Activated CD4-positive, alpha-beta T cell treated with anti-CD3 and anti-CD28 coated beads for 36 hours (primary cell): ENCODE measurements at regions of chr18 and their contacts with region 1.

Region 1: DNA sequence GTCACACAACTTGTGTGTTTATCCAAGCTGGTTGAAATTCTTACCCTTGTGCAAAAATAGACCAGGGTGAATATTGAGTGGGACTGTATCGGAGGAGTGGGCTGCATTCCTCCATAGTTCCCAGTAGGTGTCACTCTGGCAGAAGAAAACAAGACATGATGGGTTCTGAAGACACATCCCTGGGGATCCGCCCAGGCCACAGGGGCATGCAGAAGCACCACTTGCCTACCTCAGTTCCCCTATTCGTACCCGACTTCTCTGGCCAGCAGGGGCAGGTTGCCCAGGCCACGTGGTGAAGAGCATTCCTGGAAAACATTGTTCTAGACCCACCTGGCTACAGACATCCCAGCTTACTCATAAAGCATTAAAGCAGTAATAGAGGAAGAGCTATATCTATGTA is 168.2 kb downstream of the FAM210A start:
- DNase-seq: peak; percentile 58
- ATAC-seq: peak; percentile 29
- H3K4me3 Mint-ChIP-seq: no peak overlapping the region
- H3K27ac Mint-ChIP-seq: no peak overlapping the region
- H3K4me1 Mint-ChIP-seq: peaks cover 41% of the 10 kb centered on the region
- H3K27me3 Mint-ChIP-seq: no peaks in the 10 kb centered on the region

Region 2: DNA sequence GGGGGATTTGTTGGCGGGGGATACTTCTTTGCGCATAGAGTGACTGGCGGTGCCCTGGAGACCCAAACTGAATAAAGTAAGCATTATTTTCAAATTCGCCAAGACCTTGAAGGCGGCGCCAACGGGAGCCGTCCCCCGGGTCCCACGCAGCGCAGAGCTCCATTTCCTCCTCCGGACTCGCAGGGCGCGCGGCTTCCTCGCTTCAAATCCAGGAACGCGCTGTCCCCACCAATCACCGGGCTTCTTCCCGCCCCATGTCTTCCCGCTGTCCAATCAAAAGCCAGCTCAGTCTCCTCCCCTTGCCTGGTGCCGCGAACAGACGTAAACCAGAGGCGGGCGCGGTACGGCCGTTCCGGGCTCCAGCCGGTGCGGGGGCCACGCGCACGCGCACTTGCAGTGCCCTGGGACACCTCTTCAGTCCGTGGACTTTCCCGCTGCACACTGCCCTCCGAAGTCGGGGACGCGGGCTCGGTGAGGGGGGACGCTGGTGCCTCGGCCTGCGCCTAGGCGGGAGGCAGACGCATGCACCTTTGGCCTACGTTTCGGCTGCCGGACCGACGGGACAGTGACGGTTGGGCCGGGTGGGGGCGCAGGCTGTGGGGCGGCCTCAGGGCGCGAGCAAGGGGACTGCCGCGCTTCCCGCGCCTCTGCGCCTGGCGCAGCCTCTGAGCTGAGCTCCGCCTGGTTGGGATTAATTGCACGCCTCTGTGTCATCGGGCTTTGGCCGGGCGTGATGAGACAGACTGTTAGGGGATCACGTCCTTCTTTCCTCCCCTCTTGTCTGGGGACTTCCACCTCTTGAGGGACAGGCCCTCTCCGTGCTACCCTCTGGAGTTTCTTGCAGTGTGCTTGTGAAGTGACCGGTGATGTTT is 566.9 kb before region 1 on chr18 and contains the start of gene CEP192:
- CTCF ChIA-PET with region 1: no interaction called
- POLR2A ChIA-PET with region 1: no interaction called
- intact Hi-C with region 1: loop called in 1 of 2 experiments (anchors 2 kb)
- DNase-seq: peak; percentile 98
- ATAC-seq: peak; percentile 90
- H3K4me3 Mint-ChIP-seq: peak within 1 kb of the TSS; percentile 87
- H3K27ac Mint-ChIP-seq: peak within 1 kb of the TSS; percentile 93
- H3K4me1 Mint-ChIP-seq: peaks cover 21% of the 10 kb centered on the region
- H3K27me3 Mint-ChIP-seq: no peaks in the 10 kb centered on the region
- total RNA-seq, gene CEP192: 36.0 to 39.3 TPM

Region 3: GRCh38 chr18:13229001-13229671 is 329.0 kb before region 1 on chr18:
- CTCF ChIA-PET with region 1: no interaction called
- POLR2A ChIA-PET with region 1: no interaction called
- intact Hi-C with region 1: no loop called
- DNase-seq: no peak
- ATAC-seq: no peak
- H3K4me3 Mint-ChIP-seq: no peak overlapping the region
- H3K27ac Mint-ChIP-seq: no peak overlapping the region
- H3K4me1 Mint-ChIP-seq: no peaks in the 10 kb centered on the region
- H3K27me3 Mint-ChIP-seq: no peaks in the 10 kb centered on the region

Region 4: DNA sequence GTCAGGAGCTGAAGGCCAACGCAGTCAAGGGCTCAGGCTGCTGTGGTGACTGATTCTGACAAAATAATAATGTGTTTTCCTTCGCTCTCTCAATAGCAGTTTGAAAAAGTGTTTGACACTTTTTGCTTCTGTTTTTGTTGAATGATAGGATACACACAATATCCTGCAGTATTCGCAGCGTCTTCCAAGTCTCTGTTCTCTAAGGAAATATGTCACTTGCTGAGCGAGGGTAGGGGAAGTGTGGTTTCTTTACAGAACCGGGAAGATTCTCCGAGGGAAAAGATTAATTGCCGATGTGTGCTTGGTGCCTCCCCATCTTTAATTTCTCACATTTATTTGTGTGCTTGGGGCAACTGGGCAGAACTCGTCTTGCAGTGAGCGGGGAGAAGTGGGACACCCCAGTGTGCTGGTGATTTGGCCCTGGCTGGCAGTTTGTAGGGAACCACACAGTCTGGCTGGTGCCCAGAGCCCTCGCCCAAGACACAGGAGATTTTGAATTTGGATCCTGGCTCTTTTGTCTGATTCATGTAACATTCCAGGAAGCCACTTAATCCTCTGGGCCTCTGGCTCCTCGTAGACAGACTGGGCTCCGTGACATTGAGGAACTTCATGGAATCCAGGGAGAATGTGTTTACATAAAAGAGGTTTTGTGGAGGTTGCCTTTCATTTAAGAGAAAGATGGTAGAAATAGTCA is 170.1 kb before region 1 on chr18:
- CTCF ChIA-PET with region 1: no interaction called
- POLR2A ChIA-PET with region 1: no interaction called
- intact Hi-C with region 1: no loop called
- DNase-seq: no peak
- ATAC-seq: no peak
- H3K4me3 Mint-ChIP-seq: no peak overlapping the region
- H3K27ac Mint-ChIP-seq: peak overlapping the region; percentile 6
- H3K4me1 Mint-ChIP-seq: peaks cover 27% of the 10 kb centered on the region
- H3K27me3 Mint-ChIP-seq: no peaks in the 10 kb centered on the region

Region 5: GRCh38 chr18:13471971-13472628 is 86.0 kb before region 1 on chr18:
- CTCF ChIA-PET with region 1: no interaction called
- POLR2A ChIA-PET with region 1: no interaction called
- intact Hi-C with region 1: no loop called
- DNase-seq: no peak
- ATAC-seq: no peak
- H3K4me3 Mint-ChIP-seq: no peak overlapping the region
- H3K27ac Mint-ChIP-seq: peak overlapping the region; percentile 25
- H3K4me1 Mint-ChIP-seq: peaks cover 46% of the 10 kb centered on the region
- H3K27me3 Mint-ChIP-seq: no peaks in the 10 kb centered on the region

Region 6: GRCh38 chr18:13577091-13577697 is 19.1 kb after region 1 on chr18:
- CTCF ChIA-PET with region 1: interaction called, 6 read pairs
- POLR2A ChIA-PET with region 1: interaction called, 4 read pairs
- intact Hi-C with region 1: loop called in 1 of 2 experiments (anchors 2 kb)
- DNase-seq: peak; percentile 73
- ATAC-seq: peak; percentile 90
- H3K4me3 Mint-ChIP-seq: peak overlapping the region; percentile 22
- H3K27ac Mint-ChIP-seq: peak overlapping the region; percentile 55
- H3K4me1 Mint-ChIP-seq: peaks cover 47% of the 10 kb centered on the region
- H3K27me3 Mint-ChIP-seq: no peaks in the 10 kb centered on the region

Region 7: DNA sequence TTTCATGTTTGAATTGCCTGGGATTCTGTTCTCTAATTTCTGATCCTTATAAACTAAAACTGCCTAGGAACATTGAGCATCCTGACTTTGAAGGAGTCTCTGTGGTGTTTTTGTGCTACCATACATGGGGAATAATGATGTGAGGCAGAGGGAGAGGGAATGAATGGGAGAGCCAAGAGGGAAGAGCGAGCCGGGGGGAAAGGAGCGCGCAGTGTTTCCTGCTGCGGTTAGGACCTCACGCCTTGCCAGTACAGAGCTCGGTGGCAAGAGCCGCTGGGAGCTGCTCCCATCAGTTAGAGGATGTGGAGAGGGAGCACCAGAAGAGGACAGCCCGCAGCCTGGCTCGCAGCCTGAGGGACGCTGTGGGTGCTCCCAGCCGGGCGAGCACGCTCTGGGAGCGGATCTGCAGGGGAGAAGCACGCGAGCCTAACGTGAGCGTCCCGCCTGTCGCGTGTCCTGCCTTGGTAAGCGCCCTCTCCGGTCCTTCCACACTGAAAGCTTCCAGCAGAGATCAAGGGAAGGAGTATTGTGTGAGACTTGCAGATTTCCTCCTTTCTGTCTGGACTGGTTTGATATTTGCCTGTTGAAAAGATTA is 53.6 kb after region 1 on chr18:
- CTCF ChIA-PET with region 1: interaction called, 30 read pairs
- POLR2A ChIA-PET with region 1: interaction called, 3 read pairs
- intact Hi-C with region 1: loop called (anchors 1 kb)
- DNase-seq: peak; percentile 46
- ATAC-seq: peak; percentile 4
- H3K4me3 Mint-ChIP-seq: peak overlapping the region; percentile 72
- H3K27ac Mint-ChIP-seq: peak overlapping the region; percentile 87
- H3K4me1 Mint-ChIP-seq: peaks cover 84% of the 10 kb centered on the region
- H3K27me3 Mint-ChIP-seq: no peaks in the 10 kb centered on the region

Region 8: GRCh38 chr18:13746633-13747032 is 188.5 kb after region 1 on chr18:
- CTCF ChIA-PET with region 1: no interaction called
- POLR2A ChIA-PET with region 1: no interaction called
- intact Hi-C with region 1: loop called in 1 of 2 experiments (anchors 5 kb)
- DNase-seq: no peak
- ATAC-seq: no peak
- H3K4me3 Mint-ChIP-seq: no peak overlapping the region
- H3K27ac Mint-ChIP-seq: no peak overlapping the region
- H3K4me1 Mint-ChIP-seq: no peaks in the 10 kb centered on the region
- H3K27me3 Mint-ChIP-seq: no peaks in the 10 kb centered on the region